Heart right ventricle (tissue), 16 donors: ENCODE measurements at regions of chr7 and their contacts with region 1.

Region 1: DNA sequence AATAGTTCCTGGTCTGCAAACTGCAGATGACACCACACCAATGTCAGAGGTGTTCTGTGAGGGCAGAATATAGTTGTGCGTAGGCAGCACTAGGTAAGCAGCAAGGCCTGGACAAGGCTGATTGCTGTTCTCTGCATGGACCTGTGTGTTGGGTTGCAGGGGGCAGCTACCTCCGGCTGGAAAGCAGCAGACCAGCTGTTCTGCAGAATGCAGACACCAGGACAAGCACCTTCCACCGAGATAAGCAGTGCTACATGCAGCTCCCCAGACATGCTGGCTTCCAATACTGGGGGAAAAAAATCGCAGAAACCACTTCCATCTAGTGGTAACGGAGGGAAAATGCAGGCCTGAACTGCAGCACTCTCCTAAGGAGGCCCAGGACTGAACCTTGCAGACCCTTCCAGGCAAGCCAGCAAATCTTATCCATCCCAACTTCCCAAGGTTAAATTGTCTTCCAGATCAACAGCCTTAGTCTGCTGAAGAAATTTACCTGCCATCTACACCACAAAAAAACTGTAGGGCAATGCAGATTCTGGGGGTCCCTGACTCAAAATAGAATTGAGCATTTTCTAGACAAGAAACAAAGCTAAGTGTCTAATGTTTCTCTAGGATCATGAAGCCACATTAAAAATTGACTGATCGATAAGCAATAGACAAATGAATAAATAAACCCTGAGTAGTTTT is 50.5 kb upstream of the COBL start:
- DNase-seq: peak in 1 of 2 donors; percentile 30
- ATAC-seq: peak; percentile 80 to 94 (median 89)
- H3K4me3 ChIP-seq: no peak overlapping the region
- H3K27ac ChIP-seq: no peak overlapping the region
- H3K4me1 ChIP-seq: peaks cover 0 to 4% (median 0%) of the 10 kb centered on the region in 9 donors
- H3K27me3 ChIP-seq: peaks cover 0 to 3% (median 0%) of the 10 kb centered on the region in 7 donors
- CTCF ChIP-seq: peak; percentile 40 to 75 (median 67)

Region 2: DNA sequence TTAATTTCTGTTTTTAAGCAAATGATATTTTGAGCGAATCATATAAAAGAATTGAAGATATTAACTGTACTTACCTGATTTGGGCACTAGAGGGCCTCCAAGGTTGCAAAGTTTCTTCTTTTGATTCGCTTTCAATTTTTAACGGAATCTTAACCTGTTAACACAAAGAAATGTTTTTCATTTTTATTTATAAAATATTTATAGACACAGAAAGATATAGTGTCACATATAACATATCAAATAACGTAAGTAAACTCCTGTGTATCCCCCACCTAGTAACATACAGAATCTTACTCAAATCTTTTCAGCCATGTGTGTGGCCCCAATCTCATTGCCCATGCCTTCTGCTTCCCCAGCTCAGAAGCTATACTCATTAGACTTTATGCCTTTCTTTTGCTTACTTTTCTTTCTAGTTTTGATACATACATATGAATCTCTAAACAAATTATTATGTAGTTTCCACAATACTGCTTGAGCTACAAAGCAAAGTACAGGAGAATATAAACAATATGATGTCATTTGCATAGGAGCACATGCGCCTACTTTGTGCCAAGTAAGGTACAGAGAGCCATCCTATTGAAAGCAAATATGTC is 1224.6 kb before region 1 on chr7:
- intact Hi-C with region 1: loop called in 1 of 10 experiments (anchors 5 kb)
- DNase-seq: peak in 1 of 2 donors; percentile 13
- ATAC-seq: no peak
- H3K4me3 ChIP-seq: no peak overlapping the region
- H3K27ac ChIP-seq: no peak overlapping the region
- H3K4me1 ChIP-seq: peaks cover 0 to 5% (median 0%) of the 10 kb centered on the region in 9 donors
- H3K27me3 ChIP-seq: peaks cover 0 to 37% (median 14%) of the 10 kb centered on the region in 7 donors
- CTCF ChIP-seq: peak; percentile 48 to 80 (median 73)

Region 3: GRCh38 chr7:50939021-50939420 is 428.1 kb before region 1 on chr7:
- intact Hi-C with region 1: no loop called
- DNase-seq: no peak
- ATAC-seq: peak in 4 of 8 donors; percentile 52 to 64 (median 58)
- H3K4me3 ChIP-seq: no peak overlapping the region
- H3K27ac ChIP-seq: no peak overlapping the region
- H3K4me1 ChIP-seq: peaks cover 0 to 7% (median 0%) of the 10 kb centered on the region in 9 donors
- H3K27me3 ChIP-seq: no peaks in the 10 kb centered on the region
- CTCF ChIP-seq: no peak

Region 4: GRCh38 chr7:51182636-51183166 is 184.4 kb before region 1 on chr7:
- intact Hi-C with region 1: loop called in 3 of 10 experiments (anchors 5 kb)
- DNase-seq: no peak
- ATAC-seq: peak in 2 of 8 donors; percentile 54 to 63
- H3K4me3 ChIP-seq: no peak overlapping the region
- H3K27ac ChIP-seq: no peak overlapping the region
- H3K4me1 ChIP-seq: peaks cover 0 to 39% (median 18%) of the 10 kb centered on the region in 9 donors
- H3K27me3 ChIP-seq: peaks cover 0 to 4% (median 0%) of the 10 kb centered on the region in 7 donors
- CTCF ChIP-seq: no peak

Region 5: GRCh38 chr7:51253161-51253560 is 113.9 kb before region 1 on chr7:
- intact Hi-C with region 1: loop called in 1 of 10 experiments (anchors 5 kb)
- DNase-seq: no peak
- ATAC-seq: peak in 1 of 8 donors; percentile 41
- H3K4me3 ChIP-seq: no peak overlapping the region
- H3K27ac ChIP-seq: no peak overlapping the region
- H3K4me1 ChIP-seq: peaks cover 0 to 44% (median 6%) of the 10 kb centered on the region in 9 donors
- H3K27me3 ChIP-seq: no peaks in the 10 kb centered on the region
- CTCF ChIP-seq: peak in 6 of 9 donors; percentile 10 to 43 (median 28)

Region 6: DNA sequence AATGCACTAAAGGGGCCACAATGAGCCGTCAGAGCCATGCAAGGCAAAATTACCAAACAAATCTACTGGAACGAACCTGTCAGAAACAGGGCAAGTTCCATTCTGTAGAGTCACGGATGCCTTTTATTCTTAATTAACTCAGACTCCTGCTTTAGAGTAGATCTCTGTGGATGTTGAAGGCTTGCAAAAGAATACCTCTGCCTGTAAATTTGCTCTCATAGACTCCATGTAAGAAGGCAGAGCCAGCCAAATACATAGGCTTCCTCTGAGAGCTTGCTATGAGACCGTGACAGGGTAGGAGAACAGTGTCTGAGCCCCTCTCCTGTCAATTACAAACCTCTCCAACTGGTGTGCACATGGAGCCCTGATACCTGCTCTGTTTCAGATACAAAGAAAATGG is 880.4 kb after region 1 on chr7:
- intact Hi-C with region 1: no loop called
- DNase-seq: no peak
- ATAC-seq: no peak
- H3K4me3 ChIP-seq: no peak overlapping the region
- H3K27ac ChIP-seq: no peak overlapping the region
- H3K4me1 ChIP-seq: no peaks in the 10 kb centered on the region
- H3K27me3 ChIP-seq: no peaks in the 10 kb centered on the region
- CTCF ChIP-seq: no peak